ENCODE measurements at regions of chr12 and their contacts with region 1.

Region 1: DNA sequence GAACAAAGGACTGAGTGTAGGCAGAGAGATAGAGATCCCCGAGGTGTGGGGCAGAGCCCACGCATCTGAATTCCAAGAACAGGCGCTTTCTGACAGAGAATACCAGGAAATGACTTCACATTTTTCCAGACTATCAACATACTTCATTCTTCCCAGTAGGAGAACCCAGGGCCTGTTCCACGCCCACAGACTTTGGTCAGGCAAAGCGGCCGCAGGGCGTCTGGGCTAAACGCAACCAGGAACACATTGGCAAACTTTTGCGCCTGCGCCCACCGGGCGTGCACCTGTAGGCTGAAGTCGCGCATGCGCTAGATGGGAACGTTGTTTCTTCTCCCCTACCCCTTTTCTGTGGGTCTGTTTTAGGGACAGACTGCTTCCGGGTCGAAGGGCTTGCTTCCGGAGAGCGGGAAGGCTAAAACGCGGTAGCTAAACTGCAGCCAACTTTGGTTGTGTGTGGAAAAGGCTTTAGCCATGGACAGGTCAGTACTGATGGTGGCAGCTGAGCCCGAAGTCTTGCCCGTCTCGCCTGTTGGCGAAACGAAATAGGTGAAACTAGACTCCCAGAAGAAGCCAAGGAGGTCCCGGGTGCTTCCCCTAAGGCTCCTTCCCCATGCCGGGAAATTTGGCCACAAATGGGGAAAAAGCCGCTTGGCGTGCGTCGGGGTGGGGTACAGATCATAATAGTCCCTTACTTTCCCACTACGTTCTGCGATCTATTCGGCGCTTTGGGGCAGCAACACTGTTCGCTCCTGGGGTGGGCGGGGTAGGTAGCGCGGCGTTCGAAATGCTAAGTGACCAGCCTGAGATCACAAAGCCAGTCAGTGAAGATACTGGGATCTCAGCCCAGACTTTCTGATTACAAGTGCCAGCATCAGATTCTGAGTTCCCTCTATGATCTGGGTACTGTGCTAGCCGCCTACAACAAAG is at the start of gene NUP107:
- DNase-seq: peak; percentile 100
- ATAC-seq: peak; percentile 97
- total RNA-seq, gene NUP107: 23.2 to 25.8 TPM

Region 2: DNA sequence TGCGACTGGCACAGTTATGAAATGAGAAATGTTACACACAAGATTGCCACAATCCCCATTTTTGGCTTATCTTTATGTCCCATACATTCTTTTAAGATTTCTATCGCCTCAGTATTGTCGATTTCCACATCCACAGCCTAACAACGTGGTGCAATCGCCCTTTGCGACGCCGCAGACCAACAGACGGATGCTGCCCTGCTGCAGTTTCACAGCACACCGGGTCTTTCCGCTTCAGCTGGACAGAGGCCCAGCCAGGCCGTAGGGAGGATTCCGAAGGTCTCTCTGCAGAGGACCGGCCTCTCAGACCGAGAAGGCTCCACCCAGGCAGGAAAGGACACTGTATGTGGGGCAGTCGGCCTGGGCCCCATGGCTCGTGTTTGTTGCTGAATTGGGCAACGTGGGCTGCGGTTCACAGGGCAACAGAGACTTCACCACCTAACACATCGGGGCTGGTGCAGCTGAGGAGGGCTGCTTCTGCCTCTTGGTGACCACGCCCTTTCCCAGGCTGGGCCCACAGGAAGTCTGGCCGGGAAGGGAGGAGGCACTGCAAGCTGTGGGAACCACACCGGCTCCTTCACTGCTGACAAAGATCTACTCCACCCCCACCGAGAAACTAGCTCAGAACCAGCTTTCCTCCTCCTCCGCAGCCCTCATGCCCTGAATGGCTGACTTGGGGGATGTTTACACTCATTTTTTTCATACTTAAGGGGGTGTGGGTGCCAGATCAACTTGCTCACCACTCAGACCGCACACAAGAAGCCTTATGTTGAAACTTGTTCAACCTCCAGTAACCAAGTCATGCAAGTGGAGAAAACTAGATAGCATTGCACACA is 321.7 kb before region 1 on chr12:
- intact Hi-C with region 1: loop called in 1 of 2 experiments (anchors 10 kb)
- DNase-seq: peak; percentile 89 to 95
- ATAC-seq: peak; percentile 98

Region 3: GRCh38 chr12:68617160-68617926 is 69.5 kb before region 1 on chr12:
- intact Hi-C with region 1: loop called in 1 of 2 experiments (anchors 5 kb)
- DNase-seq: no peak
- ATAC-seq: no peak

Measured in left colon (tissue), 2 donors.